GM12878 (cell line): ENCODE measurements at regions of chr1 and their contacts with region 1.

Region 1: GRCh38 chr1:168439456-168440375 is 104.1 kb downstream of the XCL2 start:
- DNase-seq: peak; percentile 45
- ATAC-seq: peak; percentile 97
- H3K4me3 ChIP-seq: no peak overlapping the region
- H3K27ac ChIP-seq: no peak overlapping the region
- H3K4me1 ChIP-seq: no peaks in the 10 kb centered on the region
- H3K27me3 ChIP-seq: no peaks in the 10 kb centered on the region; a peak in 1 of 4 replicates
- CTCF ChIP-seq: peak; percentile 66 to 84 (median 73)
- EP300 ChIP-seq: no peak
- POLR2A ChIP-seq: no peak
- RAD21 ChIP-seq: peak; percentile 93

Region 2: DNA sequence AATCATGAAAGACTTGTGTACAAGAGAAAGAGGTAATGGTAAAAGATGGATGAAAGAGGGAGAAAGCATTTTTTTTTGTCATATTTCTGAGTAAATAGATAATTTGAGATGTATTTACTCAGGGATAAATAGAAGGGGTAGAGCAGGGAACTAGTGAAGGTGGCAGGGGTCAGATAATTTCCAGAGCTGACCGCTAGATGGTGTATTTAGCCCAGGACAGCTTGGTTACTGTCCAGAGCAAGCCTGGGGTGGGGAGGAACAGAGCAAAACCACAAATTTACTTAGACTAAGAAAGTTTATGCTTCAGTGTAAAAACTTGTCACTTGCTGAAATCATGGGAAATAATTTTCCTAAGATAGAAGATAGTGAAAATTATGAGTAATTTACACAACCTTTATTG is 12.6 kb after region 1 on chr1:
- CTCF ChIA-PET with region 1: interaction called, 44 read pairs
- POLR2A ChIA-PET with region 1: no interaction called
- RAD21 ChIA-PET with region 1: interaction called, 3 read pairs
- SMC1A ChIA-PET with region 1: interaction called, 114 read pairs
- in situ Hi-C with region 1: no loop called
- intact Hi-C with region 1: no loop called
- DNase-seq: no peak
- ATAC-seq: peak; percentile 63
- H3K4me3 ChIP-seq: no peak overlapping the region
- H3K27ac ChIP-seq: no peak overlapping the region
- H3K4me1 ChIP-seq: no peaks in the 10 kb centered on the region
- H3K27me3 ChIP-seq: no peaks in the 10 kb centered on the region
- CTCF ChIP-seq: peak; percentile 24 to 32 (median 29); a peak in 2 of 6 replicates
- EP300 ChIP-seq: no peak
- POLR2A ChIP-seq: no peak
- RAD21 ChIP-seq: peak; percentile 42

Region 3: DNA sequence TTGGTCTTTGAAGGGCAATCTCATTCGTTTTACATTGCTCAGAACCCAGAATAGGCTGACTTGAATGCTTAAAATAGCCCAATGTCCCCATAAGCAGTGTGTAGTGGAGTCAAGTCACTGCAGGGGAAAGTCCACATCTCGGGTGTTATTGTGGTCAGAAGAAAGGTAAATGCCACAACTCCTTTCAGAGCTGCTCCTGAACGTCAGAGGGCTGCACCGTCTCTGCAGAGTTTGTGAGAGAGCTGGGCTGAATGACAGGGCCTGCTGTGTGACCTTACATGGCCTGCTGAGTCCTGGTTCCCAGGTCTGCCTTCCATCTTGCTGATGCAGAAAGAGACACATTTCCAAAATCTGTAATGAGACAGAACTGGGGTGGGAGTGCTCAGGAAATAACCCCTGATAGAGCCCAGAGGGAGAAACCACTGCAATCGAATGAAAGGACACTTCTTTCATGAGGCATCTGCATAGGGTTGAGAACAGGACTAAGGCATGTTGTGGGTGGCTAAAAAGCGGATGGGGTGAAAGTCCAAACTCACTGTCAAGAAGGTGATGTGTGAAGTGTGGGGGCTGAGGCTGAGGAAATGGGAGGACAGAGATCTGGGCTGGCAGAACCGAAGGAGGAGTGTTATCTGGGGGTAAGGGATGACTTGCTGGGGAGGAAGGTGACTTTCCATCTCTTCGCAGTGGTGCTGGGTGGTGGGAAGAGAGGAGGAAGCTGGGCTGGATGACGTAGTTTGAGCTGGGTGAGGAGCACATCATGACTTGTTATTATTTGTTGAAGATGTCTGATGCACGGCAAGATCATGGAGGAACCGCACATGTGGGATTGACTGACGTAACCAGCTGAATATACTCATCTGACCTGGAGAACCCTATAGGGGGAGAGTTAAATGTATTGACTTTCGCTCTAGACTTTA is 70.4 kb after region 1 on chr1:
- CTCF ChIA-PET with region 1: interaction called, 28 read pairs
- POLR2A ChIA-PET with region 1: interaction called, 13 read pairs
- RAD21 ChIA-PET with region 1: interaction called, 114 read pairs
- SMC1A ChIA-PET with region 1: interaction called, 136 read pairs
- in situ Hi-C with region 1: no loop called
- intact Hi-C with region 1: no loop called
- DNase-seq: peak; percentile 88
- ATAC-seq: peak; percentile 90
- H3K4me3 ChIP-seq: no peak overlapping the region
- H3K27ac ChIP-seq: peak overlapping the region; percentile 61
- H3K4me1 ChIP-seq: peaks cover 16% of the 10 kb centered on the region
- H3K27me3 ChIP-seq: no peaks in the 10 kb centered on the region
- CTCF ChIP-seq: no peak
- EP300 ChIP-seq: peak; percentile 12 to 64; a peak in 3 of 4 replicates
- POLR2A ChIP-seq: no peak
- RAD21 ChIP-seq: no peak; the same call in 1 of the 2 replicates

Region 4: GRCh38 chr1:168560370-168560769 is 120.7 kb after region 1 on chr1:
- CTCF ChIA-PET with region 1: interaction called, 28 read pairs
- POLR2A ChIA-PET with region 1: no interaction called
- RAD21 ChIA-PET with region 1: interaction called, 70 read pairs
- SMC1A ChIA-PET with region 1: interaction called, 100 read pairs
- in situ Hi-C with region 1: loop called (anchors 5 kb)
- intact Hi-C with region 1: no loop called
- DNase-seq: no peak
- ATAC-seq: no peak
- H3K4me3 ChIP-seq: no peak overlapping the region
- H3K27ac ChIP-seq: no peak overlapping the region
- H3K4me1 ChIP-seq: no peaks in the 10 kb centered on the region
- H3K27me3 ChIP-seq: no peaks in the 10 kb centered on the region
- CTCF ChIP-seq: no peak
- EP300 ChIP-seq: no peak
- POLR2A ChIP-seq: no peak
- RAD21 ChIP-seq: no peak

Region 5: DNA sequence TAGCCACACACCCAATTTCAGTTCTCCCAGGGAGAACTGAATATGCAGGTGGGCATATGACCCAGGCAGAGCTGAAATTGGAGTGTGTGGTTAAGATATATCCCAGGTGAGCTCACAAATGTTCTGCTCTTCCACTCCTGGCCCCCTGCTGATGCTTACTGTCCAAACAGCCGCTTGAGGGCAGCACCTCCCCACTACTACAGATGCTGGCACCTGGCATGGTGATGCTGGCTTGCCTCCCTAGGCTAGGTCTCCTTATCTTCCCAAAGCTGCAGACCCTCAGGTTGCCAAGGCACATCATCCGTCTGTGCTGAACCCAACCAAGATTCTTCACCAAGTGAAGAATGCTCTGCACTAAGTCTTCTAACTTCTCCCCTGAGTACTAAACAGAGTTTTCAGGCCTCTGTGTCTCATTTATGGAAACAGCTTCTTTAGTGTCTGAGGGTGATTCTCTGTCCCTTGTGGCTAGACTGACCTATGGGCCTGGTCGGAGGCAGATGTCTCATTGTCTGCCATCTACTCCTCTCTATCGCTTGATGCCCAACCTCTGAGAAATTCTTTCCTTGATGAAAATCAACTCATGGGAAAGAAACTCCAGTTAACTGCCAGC is 163.9 kb after region 1 on chr1:
- CTCF ChIA-PET with region 1: interaction called, 226 read pairs
- POLR2A ChIA-PET with region 1: interaction called, 3 read pairs
- RAD21 ChIA-PET with region 1: interaction called, 179 read pairs
- SMC1A ChIA-PET with region 1: interaction called, 314 read pairs
- in situ Hi-C with region 1: no loop called
- intact Hi-C with region 1: no loop called
- DNase-seq: peak; percentile 7
- ATAC-seq: peak; percentile 99
- H3K4me3 ChIP-seq: no peak overlapping the region
- H3K27ac ChIP-seq: no peak overlapping the region
- H3K4me1 ChIP-seq: no peaks in the 10 kb centered on the region
- H3K27me3 ChIP-seq: no peaks in the 10 kb centered on the region; a peak in 1 of 4 replicates
- CTCF ChIP-seq: peak; percentile 76 to 92 (median 80)
- EP300 ChIP-seq: no peak
- POLR2A ChIP-seq: no peak
- RAD21 ChIP-seq: peak; percentile 97

Region 6: DNA sequence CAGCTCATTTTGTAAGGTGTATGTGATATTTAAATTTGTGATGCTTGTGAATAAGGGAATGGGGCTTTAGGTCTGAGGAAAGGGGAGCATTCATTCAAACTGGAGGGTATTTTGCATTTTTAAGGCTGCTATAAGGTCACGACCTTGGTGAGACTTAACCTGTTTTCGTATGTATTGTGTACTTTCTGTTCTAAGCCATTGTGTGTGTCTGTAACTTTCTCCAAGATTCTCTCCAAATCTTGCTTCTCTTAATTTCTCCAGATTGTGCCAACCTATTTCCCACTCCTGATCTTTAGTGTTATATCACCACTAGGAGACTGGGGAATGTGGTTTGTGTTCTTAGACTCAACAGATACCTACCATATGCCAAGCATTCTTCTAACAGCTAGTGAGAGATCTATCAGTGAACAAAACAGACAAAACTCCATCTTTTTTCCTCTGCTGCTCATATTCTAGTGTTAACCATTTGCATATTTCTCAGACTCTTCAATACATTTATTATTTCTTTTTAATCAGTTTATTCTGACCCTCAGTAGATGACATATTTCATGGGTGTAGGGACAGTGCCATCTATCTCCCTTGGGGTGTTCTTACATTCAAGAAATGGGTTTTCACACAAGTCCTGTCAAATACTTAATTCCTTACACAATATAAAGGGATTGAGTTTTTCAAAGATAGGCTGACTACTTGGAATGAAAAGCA is 694.2 kb after region 1 on chr1:
- CTCF ChIA-PET with region 1: no interaction called
- POLR2A ChIA-PET with region 1: no interaction called
- RAD21 ChIA-PET with region 1: interaction called, 10 read pairs
- SMC1A ChIA-PET with region 1: interaction called, 7 read pairs
- in situ Hi-C with region 1: no loop called
- intact Hi-C with region 1: loop called (anchors 10 kb)
- DNase-seq: no peak
- ATAC-seq: peak; percentile 49; the same call in 1 of the 3 replicates
- H3K4me3 ChIP-seq: no peak overlapping the region
- H3K27ac ChIP-seq: no peak overlapping the region
- H3K4me1 ChIP-seq: no peaks in the 10 kb centered on the region
- H3K27me3 ChIP-seq: no peaks in the 10 kb centered on the region
- CTCF ChIP-seq: peak in 2 of 3 experiments; percentile 30 to 58; a peak in 3 of 6 replicates
- EP300 ChIP-seq: no peak
- POLR2A ChIP-seq: no peak
- RAD21 ChIP-seq: peak; percentile 65